ENCODE measurements at regions of chr4 and their contacts with region 1.

Region 1: GRCh38 chr4:40316782-40317635 is 18.1 kb upstream of the CHRNA9 start:
- DNase-seq: peak; percentile 60
- ATAC-seq: peak; percentile 89
- H3K4me3 Mint-ChIP-seq: peak overlapping the region; percentile 3; the same call in 1 of the 2 replicates
- H3K27ac Mint-ChIP-seq: peak overlapping the region; percentile 87
- H3K4me1 Mint-ChIP-seq: peaks cover 36% of the 10 kb centered on the region
- H3K27me3 Mint-ChIP-seq: no peaks in the 10 kb centered on the region
- CTCF ChIP-seq: peak; percentile 89

Region 2: DNA sequence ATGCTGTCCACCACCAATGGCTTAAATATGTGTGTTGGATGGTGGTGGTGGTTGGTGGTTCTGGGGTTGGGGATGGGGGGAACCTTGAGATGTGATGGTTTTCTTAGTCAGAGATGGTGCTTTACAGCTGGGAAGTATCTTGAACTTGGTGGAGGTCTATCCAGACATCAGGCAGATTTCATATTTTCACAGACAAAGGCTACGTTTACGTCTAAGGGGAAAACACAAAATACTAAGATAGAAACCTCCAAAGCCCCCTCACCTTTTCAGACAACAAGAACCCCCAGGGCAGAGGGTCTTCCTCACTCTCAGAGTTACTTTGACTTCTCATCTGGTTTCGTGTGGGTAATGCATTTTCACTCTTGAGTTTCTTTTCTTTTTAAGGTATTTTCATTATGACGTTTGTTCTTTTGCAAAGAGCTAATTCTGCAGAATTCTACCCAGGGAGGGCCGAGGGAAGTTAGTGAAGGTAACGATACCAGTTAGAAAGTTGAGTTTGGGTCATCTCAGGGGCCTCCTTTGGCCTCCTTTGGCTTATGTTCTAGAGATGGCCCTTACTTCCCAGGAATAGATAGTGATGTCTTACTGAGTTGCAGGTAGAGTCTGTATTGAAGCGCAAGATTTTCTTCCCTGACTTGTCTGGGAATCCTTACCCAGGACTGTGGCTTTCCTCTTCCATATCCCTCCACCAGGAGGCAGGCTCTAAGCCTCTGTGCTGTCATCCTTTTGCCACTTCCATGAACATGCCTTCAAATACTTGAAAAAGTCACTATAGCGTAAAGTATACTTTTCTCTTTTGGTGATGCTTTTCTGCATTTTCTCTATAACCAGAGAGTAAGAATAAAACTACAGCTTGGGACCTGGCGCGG is 88.3 kb before region 1 on chr4:
- CTCF ChIA-PET with region 1: interaction called, 12 read pairs
- POLR2A ChIA-PET with region 1: no interaction called
- DNase-seq: peak; percentile 52
- ATAC-seq: peak; percentile 86
- H3K4me3 Mint-ChIP-seq: no peak overlapping the region
- H3K27ac Mint-ChIP-seq: 0 out of 2 replicates have a peak overlapping the region, but pooled peaks have one; percentile 19
- H3K4me1 Mint-ChIP-seq: peaks cover 28% of the 10 kb centered on the region
- H3K27me3 Mint-ChIP-seq: no peaks in the 10 kb centered on the region
- CTCF ChIP-seq: peak; percentile 44; the same call in 1 of the 2 replicates

Region 3: DNA sequence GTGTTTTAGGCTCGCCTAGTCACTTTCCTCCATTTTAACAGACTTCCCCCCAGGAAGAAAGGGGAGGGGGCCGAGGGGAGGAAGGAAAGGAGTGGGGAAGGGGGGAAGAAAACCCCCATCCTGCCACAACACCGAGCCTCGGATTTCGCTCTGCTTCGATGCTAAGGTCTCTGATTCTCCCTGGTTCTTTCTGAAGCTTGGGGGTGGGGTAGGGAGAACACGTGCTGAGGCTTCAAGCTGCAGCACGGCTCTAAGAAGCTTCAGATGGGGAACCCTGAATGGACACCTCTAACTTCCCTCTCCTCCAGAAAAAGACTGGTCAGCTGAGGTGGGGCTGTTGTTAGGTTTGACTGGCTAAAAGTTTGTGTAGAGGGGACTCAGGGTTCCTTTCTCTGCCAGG is 58.4 kb before region 1 on chr4:
- CTCF ChIA-PET with region 1: interaction called, 12 read pairs
- POLR2A ChIA-PET with region 1: no interaction called
- DNase-seq: no peak
- ATAC-seq: peak; percentile 36
- H3K4me3 Mint-ChIP-seq: no peak overlapping the region
- H3K27ac Mint-ChIP-seq: no peak overlapping the region
- H3K4me1 Mint-ChIP-seq: peaks cover 22% of the 10 kb centered on the region
- H3K27me3 Mint-ChIP-seq: no peaks in the 10 kb centered on the region; the same call in 1 of the 2 replicates
- CTCF ChIP-seq: no peak

Region 4: DNA sequence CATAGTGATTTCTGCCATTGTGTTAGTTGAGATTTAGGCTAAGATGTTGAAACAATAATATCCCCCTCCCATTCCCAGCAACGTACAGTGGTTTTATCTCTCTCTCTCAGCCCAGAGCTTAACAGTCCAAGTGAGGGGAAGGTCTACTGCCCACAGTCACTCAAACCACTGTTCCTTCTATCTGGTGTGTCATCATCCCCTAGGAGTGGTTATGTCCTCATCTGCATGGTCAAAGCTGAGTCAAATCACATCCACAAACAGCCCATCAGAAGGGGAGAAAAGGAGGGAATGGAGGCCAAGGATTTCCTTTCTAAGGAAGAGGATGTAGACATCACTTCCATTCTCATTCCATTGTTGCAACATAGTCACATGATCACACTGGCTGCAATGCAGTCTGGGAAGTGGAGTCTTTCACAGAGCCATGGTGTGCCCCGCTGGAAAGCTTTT is 24.7 kb before region 1 on chr4:
- CTCF ChIA-PET with region 1: interaction called, 10 read pairs
- POLR2A ChIA-PET with region 1: no interaction called
- DNase-seq: no peak
- ATAC-seq: peak; percentile 93
- H3K4me3 Mint-ChIP-seq: no peak overlapping the region
- H3K27ac Mint-ChIP-seq: no peak overlapping the region
- H3K4me1 Mint-ChIP-seq: peaks cover 11% of the 10 kb centered on the region
- H3K27me3 Mint-ChIP-seq: peaks cover 5% of the 10 kb centered on the region; the same call in 1 of the 2 replicates
- CTCF ChIP-seq: no peak

Region 5: DNA sequence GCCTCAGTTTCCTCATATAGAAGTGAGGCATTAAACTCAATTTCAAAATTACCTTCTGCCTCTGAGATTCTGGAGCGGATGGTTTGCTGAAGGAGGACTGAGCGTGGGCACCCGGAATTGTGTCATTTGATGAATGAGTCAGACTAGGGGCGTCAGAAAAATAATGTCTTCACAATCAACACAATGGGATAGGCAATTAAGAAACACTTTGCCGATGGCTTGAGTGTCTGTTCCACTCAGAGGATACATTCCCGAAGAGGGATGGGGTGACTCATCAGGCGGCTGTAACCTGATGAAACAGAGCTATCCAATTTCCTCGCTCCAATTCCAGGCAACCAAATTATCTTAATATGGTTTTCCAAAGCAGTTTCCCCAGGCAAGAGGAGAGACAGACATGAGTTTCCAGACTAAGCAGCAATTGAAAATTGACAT is 16.9 kb after region 1 on chr4:
- CTCF ChIA-PET with region 1: interaction called, 65 read pairs
- POLR2A ChIA-PET with region 1: no interaction called
- DNase-seq: no peak
- ATAC-seq: no peak
- H3K4me3 Mint-ChIP-seq: no peak overlapping the region
- H3K27ac Mint-ChIP-seq: no peak overlapping the region
- H3K4me1 Mint-ChIP-seq: peaks cover 42% of the 10 kb centered on the region
- H3K27me3 Mint-ChIP-seq: peaks cover 3% of the 10 kb centered on the region; the same call in 1 of the 2 replicates
- CTCF ChIP-seq: no peak

Measured in WTC11 (cell line).